Astrocyte of the cerebellum (primary cell): ENCODE measurements at regions of chr1 and their contacts with region 1.

Region 1: DNA sequence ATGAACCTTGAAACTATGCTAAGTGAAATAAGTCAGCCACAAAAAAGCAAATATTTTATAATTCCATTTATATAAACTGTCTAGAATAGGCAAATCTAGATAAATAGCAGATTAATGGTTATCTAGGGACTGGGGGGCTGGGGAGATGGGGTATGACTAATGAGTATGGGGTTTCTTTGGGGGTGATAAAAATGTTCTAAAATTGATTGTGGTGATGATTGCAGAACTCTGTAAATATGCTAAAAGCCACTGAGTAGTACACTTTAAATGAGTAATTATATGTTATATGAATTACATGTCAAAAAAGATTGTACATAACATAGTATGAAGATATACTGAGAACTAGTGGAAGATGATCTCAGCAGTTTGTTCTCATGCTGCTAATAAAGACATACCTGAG is 675.0 kb downstream of the KIF26B start:
- DNase-seq: no peak
- H3K4me3 ChIP-seq: no peak overlapping the region
- CTCF ChIP-seq: no peak

Region 2: GRCh38 chr1:245869867-245870266 is 40.0 kb after region 1 on chr1:
- in situ Hi-C with region 1: loop called (anchors 5 kb)
- DNase-seq: no peak
- H3K4me3 ChIP-seq: no peak overlapping the region
- CTCF ChIP-seq: no peak

Region 3: DNA sequence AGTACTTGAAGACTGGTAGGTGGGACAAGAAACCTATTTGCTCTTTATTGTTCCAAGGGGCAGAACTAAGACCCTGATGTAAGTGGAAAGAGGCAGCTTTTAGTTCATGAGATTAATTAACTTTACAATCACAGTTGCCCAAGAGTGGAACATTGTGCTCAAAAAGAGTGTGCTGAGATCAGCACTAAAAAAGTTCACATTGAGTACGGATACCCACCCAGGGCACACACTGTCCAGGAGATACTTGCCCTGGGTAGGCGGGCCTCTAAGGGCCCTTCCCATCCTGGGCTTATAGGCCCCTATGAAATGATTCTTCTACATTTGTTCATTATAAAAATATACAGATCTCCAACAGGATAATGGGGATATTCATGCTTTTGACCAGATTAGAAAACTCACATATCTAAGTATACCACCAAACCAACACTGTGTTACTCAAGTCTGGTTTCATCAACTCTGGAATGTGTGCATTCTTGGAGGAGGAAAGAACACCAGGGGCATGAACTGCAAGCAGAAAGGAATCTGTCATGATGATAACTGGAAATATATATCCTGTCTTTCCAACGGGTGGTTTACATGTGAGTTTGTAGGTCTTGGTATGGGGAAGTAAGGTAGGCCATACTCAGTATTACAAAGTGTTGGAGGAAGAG is 51.1 kb after region 1 on chr1:
- in situ Hi-C with region 1: no loop called
- DNase-seq: peak; percentile 73
- H3K4me3 ChIP-seq: no peak overlapping the region
- CTCF ChIP-seq: no peak